Activated CD4-positive, alpha-beta memory T cell treated with anti-CD3 and anti-CD28 coated beads, Interleukin-2, amount 10 ng/mL, durations not matched to agents 7 days and 5 days (primary cell): ENCODE measurements at regions of chr15 and their contacts with region 1.

Region 1: DNA sequence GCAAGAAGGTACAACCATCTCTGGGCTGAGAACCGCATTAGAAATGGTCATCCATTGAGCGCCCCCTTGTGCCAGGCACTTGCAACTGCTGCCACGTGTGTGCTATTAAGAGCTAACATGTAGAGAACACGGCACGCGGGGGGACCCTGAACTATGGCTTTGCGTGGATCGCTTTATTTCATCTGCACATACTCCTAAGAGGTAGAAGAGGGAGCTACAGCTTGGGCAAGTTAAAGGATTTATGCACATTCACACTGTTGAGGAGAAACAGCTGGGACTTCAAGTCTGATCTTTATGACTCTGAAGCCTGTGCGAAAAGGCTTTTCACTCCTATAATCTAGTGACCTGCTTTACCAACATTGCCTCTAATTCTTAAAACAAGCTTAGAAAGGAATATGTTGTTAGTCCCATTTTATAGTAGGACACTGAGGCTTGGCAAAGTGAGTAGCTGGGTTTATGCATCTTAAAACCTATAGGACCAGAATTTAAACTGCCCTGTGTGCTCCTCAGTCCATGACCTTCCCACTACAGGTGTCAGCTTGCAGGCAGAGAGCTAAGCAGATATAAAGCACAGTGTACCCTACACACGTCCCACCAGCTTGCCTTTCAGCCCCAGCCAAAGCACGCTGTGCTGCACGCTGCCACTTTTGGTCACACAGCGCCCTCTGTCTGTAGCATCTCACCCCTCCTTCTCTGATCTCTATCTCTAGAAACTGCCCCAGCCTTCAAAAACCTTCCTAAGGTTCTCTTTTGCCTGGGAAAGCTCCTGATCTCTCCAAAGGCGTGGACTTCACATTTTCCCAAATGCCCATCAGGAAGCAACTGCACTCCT is 57.8 kb downstream of the STARD5 start:
- DNase-seq: peak; percentile 87
- H3K4me3 Mint-ChIP-seq: peak overlapping the region; percentile 47
- H3K27ac Mint-ChIP-seq: peak overlapping the region; percentile 45
- H3K4me1 Mint-ChIP-seq: peaks cover 25% of the 10 kb centered on the region
- H3K27me3 Mint-ChIP-seq: peaks cover 12% of the 10 kb centered on the region

Region 2: GRCh38 chr15:80970018-80970658 is 296.0 kb before region 1 on chr15:
- CTCF ChIA-PET with region 1: interaction called, 30 read pairs
- POLR2A ChIA-PET with region 1: no interaction called
- DNase-seq: peak; percentile 62
- H3K4me3 Mint-ChIP-seq: no peak overlapping the region
- H3K27ac Mint-ChIP-seq: no peak overlapping the region
- H3K4me1 Mint-ChIP-seq: peaks cover 7% of the 10 kb centered on the region
- H3K27me3 Mint-ChIP-seq: no peaks in the 10 kb centered on the region

Region 3: GRCh38 chr15:81068516-81068915 is 197.6 kb before region 1 on chr15:
- CTCF ChIA-PET with region 1: no interaction called
- POLR2A ChIA-PET with region 1: no interaction called
- DNase-seq: no peak
- H3K4me3 Mint-ChIP-seq: no peak overlapping the region
- H3K27ac Mint-ChIP-seq: no peak overlapping the region
- H3K4me1 Mint-ChIP-seq: peaks cover 5% of the 10 kb centered on the region
- H3K27me3 Mint-ChIP-seq: peaks cover 5% of the 10 kb centered on the region

Region 4: GRCh38 chr15:81106560-81106959 is 159.6 kb before region 1 on chr15:
- CTCF ChIA-PET with region 1: interaction called, 296 read pairs
- POLR2A ChIA-PET with region 1: interaction called, 8 read pairs
- DNase-seq: peak; percentile 56
- H3K4me3 Mint-ChIP-seq: no peak overlapping the region
- H3K27ac Mint-ChIP-seq: no peak overlapping the region
- H3K4me1 Mint-ChIP-seq: peaks cover 13% of the 10 kb centered on the region
- H3K27me3 Mint-ChIP-seq: peaks cover 42% of the 10 kb centered on the region

Region 5: GRCh38 chr15:81155375-81156218 is 110.6 kb before region 1 on chr15:
- CTCF ChIA-PET with region 1: interaction called, 405 read pairs
- POLR2A ChIA-PET with region 1: interaction called, 7 read pairs
- DNase-seq: peak; percentile 30
- H3K4me3 Mint-ChIP-seq: no peak overlapping the region
- H3K27ac Mint-ChIP-seq: no peak overlapping the region
- H3K4me1 Mint-ChIP-seq: peaks cover 16% of the 10 kb centered on the region
- H3K27me3 Mint-ChIP-seq: peaks cover 15% of the 10 kb centered on the region

Region 6: GRCh38 chr15:81206018-81206417 is 60.1 kb before region 1 on chr15:
- CTCF ChIA-PET with region 1: no interaction called
- POLR2A ChIA-PET with region 1: no interaction called
- DNase-seq: no peak
- H3K4me3 Mint-ChIP-seq: no peak overlapping the region
- H3K27ac Mint-ChIP-seq: no peak overlapping the region
- H3K4me1 Mint-ChIP-seq: no peaks in the 10 kb centered on the region
- H3K27me3 Mint-ChIP-seq: peaks cover 25% of the 10 kb centered on the region

Region 7: DNA sequence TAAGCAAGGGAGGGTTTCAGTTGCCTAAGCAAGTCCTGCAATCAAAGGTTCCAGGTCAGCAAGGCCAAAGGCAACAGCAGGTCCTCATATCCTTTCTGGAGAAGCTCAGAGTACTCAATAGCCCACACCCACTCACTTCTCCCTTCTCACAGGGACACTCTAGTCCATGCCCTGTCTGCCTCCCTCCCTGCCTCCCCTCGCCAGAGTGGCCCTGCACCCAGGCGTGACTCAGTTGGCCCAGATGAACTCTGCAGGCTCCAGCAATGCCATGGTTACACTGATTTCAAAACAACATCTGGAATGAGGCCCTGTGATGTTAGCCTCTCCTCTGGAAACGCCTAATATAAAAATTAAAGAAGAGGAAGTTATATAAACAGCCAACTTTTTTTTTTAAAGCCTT is 36.6 kb before region 1 on chr15:
- CTCF ChIA-PET with region 1: interaction called, 25 read pairs
- POLR2A ChIA-PET with region 1: no interaction called
- DNase-seq: no peak
- H3K4me3 Mint-ChIP-seq: no peak overlapping the region
- H3K27ac Mint-ChIP-seq: no peak overlapping the region
- H3K4me1 Mint-ChIP-seq: no peaks in the 10 kb centered on the region
- H3K27me3 Mint-ChIP-seq: peaks cover 14% of the 10 kb centered on the region

Region 8: GRCh38 chr15:81311752-81312464 is 45.7 kb after region 1 on chr15:
- CTCF ChIA-PET with region 1: interaction called, 11 read pairs
- POLR2A ChIA-PET with region 1: no interaction called
- DNase-seq: no peak
- H3K4me3 Mint-ChIP-seq: no peak overlapping the region
- H3K27ac Mint-ChIP-seq: peak overlapping the region; percentile 11
- H3K4me1 Mint-ChIP-seq: peaks cover 20% of the 10 kb centered on the region
- H3K27me3 Mint-ChIP-seq: no peaks in the 10 kb centered on the region

Region 9: DNA sequence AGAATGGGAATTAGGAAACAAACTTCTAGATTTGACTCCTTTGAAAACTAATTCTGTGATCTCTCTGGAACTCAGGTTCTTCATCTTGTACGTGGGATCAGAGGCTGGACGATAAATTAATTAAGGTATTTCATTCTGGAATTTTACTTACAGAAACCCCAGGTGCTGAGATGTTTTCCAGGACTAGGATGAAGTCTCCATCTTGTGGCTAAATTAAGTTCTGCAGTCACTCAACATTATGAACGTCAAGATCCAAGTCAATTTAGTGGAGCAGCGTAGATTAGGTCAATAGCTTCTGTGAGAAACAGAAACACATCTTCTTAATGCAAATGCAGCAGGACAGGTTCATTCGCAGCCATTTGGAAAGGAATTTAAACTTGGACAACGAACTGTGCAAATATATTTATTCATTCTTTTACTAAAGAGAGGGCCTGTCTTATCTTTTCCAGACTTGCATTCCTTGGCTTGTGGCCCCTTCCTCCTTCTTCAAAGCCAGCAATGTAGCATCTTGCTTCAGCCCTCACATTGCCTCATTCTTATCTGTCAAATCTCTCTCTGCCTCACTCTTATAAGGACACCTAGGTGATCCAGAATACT is 134.6 kb after region 1 on chr15:
- CTCF ChIA-PET with region 1: interaction called, 84 read pairs
- POLR2A ChIA-PET with region 1: no interaction called
- DNase-seq: no peak
- H3K4me3 Mint-ChIP-seq: no peak overlapping the region
- H3K27ac Mint-ChIP-seq: no peak overlapping the region
- H3K4me1 Mint-ChIP-seq: no peaks in the 10 kb centered on the region
- H3K27me3 Mint-ChIP-seq: no peaks in the 10 kb centered on the region